A673 (cell line): ENCODE measurements at regions of chr9 and their contacts with region 1.

Region 1: GRCh38 chr9:111886983-111887711 is 9.5 kb upstream of the UGCG start:
- DNase-seq: no peak
- H3K4me3 ChIP-seq: no peak overlapping the region
- H3K27ac ChIP-seq: no peak overlapping the region
- H3K4me1 ChIP-seq: no peaks in the 10 kb centered on the region
- H3K27me3 ChIP-seq: no peaks in the 10 kb centered on the region
- CTCF ChIP-seq: no peak

Region 2: GRCh38 chr9:111948951-111949734 is 62.0 kb after region 1 on chr9:
- CTCF ChIA-PET with region 1: no interaction called
- POLR2A ChIA-PET with region 1: interaction called, 10 read pairs
- intact Hi-C with region 1: no loop called
- DNase-seq: no peak
- H3K4me3 ChIP-seq: no peak overlapping the region
- H3K27ac ChIP-seq: no peak overlapping the region
- H3K4me1 ChIP-seq: no peaks in the 10 kb centered on the region
- H3K27me3 ChIP-seq: no peaks in the 10 kb centered on the region
- CTCF ChIP-seq: no peak